Lower lobe of right lung (tissue), 2 donors: ENCODE measurements at regions of chr17 and their contacts with region 1.

Region 1: GRCh38 chr17:75405365-75406221 is at the start of gene GRB2:
- DNase-seq: peak; percentile 99
- ATAC-seq: peak; percentile 97 to 98
- H3K4me3 ChIP-seq: peak within 1 kb of the TSS; percentile 94
- H3K27ac ChIP-seq: peak within 1 kb of the TSS; percentile 97
- H3K4me1 ChIP-seq: peaks cover 44% of the 10 kb centered on the region
- H3K27me3 ChIP-seq: no peaks in the 10 kb centered on the region
- CTCF ChIP-seq: no peak
- total RNA-seq, gene GRB2: 181 TPM

Region 2: GRCh38 chr17:75319904-75320691 is 85.5 kb before region 1 on chr17:
- intact Hi-C with region 1: loop called (anchors 10 kb)
- DNase-seq: no peak
- ATAC-seq: no peak
- H3K4me3 ChIP-seq: no peak overlapping the region
- H3K27ac ChIP-seq: no peak overlapping the region
- H3K4me1 ChIP-seq: peaks cover 35% of the 10 kb centered on the region
- H3K27me3 ChIP-seq: no peaks in the 10 kb centered on the region
- CTCF ChIP-seq: no peak